Activated naive CD4-positive, alpha-beta T cell treated with anti-CD3 and anti-CD28 coated beads for 36 hours (primary cell): ENCODE measurements at regions of chr1 and their contacts with region 1.

Region 1: DNA sequence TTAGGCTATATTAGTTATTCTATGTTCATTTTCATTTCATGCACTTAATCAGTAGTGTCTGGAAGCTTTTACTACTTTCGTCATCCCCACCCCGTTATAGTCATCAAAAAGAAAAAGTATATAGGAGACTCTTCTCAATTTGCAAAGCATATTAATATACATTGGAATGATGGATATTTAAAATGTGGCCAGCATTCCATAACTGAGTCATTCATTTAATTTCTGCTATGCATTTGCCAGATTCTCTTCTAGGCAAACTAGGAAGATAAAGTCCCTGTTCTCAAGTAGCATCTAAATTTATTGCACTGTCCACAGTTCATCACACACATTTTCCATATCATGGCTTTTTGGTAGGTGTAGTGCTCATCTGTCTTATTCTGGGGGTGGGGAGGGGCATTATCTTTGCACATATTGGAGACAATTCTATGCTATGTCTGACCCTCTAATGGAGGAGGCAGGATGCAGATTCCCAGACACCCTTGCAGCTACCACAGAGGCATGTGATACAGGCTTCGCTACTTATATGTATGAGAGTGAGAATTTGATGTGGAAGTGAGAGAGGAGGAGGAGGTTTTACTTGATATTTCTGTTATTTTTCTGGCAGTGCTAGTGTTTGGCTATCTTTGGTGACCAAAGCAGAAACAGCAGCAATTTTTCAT is 125.8 kb downstream of the CTH start:
- DNase-seq: no peak
- H3K4me3 Mint-ChIP-seq: no peak overlapping the region
- H3K27ac Mint-ChIP-seq: no peak overlapping the region
- H3K4me1 Mint-ChIP-seq: peaks cover 2% of the 10 kb centered on the region
- H3K27me3 Mint-ChIP-seq: peaks cover 16% of the 10 kb centered on the region

Region 2: DNA sequence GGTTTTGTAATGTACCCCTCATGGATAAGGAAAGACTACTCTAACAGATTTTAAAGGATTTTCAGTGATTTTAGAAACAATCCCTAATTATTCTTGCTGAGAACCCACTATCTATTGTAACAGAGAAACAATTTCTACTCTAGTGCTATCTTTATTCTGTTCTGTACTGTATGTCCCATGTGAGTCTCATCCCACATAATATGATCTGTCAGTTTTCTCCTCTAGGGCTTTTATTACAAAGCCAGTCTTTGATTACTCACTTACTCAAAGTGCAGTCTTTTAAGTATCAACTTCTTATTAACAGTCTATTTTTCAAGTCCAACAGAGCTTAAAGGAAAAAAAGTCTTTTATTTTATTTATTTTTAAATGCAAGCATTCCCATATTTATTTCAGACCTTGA is 70.9 kb before region 1 on chr1:
- CTCF ChIA-PET with region 1: no interaction called
- intact Hi-C with region 1: loop called (anchors 2 kb)
- DNase-seq: no peak
- H3K4me3 Mint-ChIP-seq: no peak overlapping the region
- H3K27ac Mint-ChIP-seq: no peak overlapping the region
- H3K4me1 Mint-ChIP-seq: no peaks in the 10 kb centered on the region
- H3K27me3 Mint-ChIP-seq: peaks cover 8% of the 10 kb centered on the region

Region 3: GRCh38 chr1:70718086-70718630 is 181.3 kb after region 1 on chr1:
- CTCF ChIA-PET with region 1: no interaction called
- intact Hi-C with region 1: no loop called
- DNase-seq: no peak
- H3K4me3 Mint-ChIP-seq: no peak overlapping the region
- H3K27ac Mint-ChIP-seq: no peak overlapping the region
- H3K4me1 Mint-ChIP-seq: no peaks in the 10 kb centered on the region
- H3K27me3 Mint-ChIP-seq: no peaks in the 10 kb centered on the region

Region 4: DNA sequence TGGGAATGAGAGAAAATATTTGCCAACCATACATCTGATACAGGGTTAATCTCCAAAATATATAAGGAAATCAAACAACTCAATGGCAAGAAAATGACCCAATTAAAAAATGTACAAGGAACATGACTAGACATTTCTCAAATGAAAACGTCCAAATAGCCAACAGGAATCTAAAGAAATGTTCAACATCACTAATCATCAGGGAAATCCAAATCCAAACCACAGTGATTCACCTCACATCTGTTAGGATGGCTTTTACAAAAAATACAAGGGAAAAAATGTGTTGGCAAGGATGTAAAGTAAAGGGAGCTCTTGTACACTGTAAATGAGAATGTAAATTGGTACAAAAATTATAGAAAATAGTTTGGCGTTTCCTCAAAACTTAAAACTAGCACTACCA is 598.7 kb after region 1 on chr1:
- CTCF ChIA-PET with region 1: no interaction called
- intact Hi-C with region 1: no loop called
- DNase-seq: no peak
- H3K4me3 Mint-ChIP-seq: no peak overlapping the region
- H3K27ac Mint-ChIP-seq: no peak overlapping the region
- H3K4me1 Mint-ChIP-seq: no peaks in the 10 kb centered on the region
- H3K27me3 Mint-ChIP-seq: no peaks in the 10 kb centered on the region